ENCODE measurements at regions of chr9 and their contacts with region 1.

Region 1: DNA sequence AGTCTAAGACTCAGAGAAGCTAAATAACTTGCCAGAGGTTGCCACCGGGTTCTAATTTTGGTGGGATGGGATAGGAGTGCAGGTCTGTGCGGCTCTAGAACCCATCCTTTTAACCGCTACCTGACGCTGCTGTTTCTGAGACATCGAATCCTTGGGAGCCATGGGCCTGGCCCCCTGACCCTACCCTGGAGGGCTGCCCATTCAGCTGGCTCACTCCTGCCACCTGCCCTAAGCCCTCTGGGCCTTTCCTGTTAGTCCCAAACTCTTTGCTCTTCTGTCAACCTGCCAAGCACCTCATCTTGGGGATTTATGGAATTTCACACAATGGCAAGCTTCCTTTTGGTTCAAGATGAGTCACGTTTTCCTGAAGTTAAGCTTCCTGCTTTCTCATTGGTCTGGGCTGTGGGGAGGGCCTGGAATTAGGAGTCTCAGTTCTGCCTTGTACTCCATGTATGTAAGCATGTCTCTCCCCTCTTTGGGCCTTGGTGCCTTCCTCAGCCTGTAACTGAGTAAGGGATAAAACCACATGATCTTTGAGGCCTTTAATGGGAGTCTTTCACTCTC is 26.6 kb downstream of the ENHO start:
- DNase-seq: no peak
- ATAC-seq: no peak
- H3K4me3 ChIP-seq: no peak overlapping the region
- H3K27ac ChIP-seq: no peak overlapping the region
- H3K4me1 ChIP-seq: peaks cover under 1% of the 10 kb centered on the region
- H3K27me3 ChIP-seq: no peaks in the 10 kb centered on the region
- CTCF ChIP-seq: no peak
- POLR2A ChIP-seq: no peak

Region 2: GRCh38 chr9:34437006-34437925 is 59.0 kb before region 1 on chr9:
- intact Hi-C with region 1: loop called (anchors 5 kb)
- DNase-seq: peak; percentile 69 to 81 (median 74)
- ATAC-seq: peak; percentile 80
- H3K4me3 ChIP-seq: no peak overlapping the region
- H3K27ac ChIP-seq: no peak overlapping the region
- H3K4me1 ChIP-seq: no peaks in the 10 kb centered on the region
- H3K27me3 ChIP-seq: no peaks in the 10 kb centered on the region
- CTCF ChIP-seq: peak; percentile 58 to 85 (median 79)
- POLR2A ChIP-seq: no peak

Measured in body of pancreas (tissue), 4 donors.